Activated CD8-positive, alpha-beta T cell treated with anti-CD3 and anti-CD28 coated beads, Interleukin-2, amount 10 ng/mL, durations not matched to agents 7 days and 5 days (primary cell): ENCODE measurements at regions of chr14 and their contacts with region 1.

Region 1: GRCh38 chr14:94412671-94413638 is 24.6 kb upstream of the SERPINA1 start:
- DNase-seq: no peak
- ATAC-seq: no peak
- H3K4me3 Mint-ChIP-seq: no peak overlapping the region
- H3K27ac Mint-ChIP-seq: no peak overlapping the region
- H3K4me1 Mint-ChIP-seq: no peaks in the 10 kb centered on the region
- H3K27me3 Mint-ChIP-seq: peaks cover 3% of the 10 kb centered on the region

Region 2: DNA sequence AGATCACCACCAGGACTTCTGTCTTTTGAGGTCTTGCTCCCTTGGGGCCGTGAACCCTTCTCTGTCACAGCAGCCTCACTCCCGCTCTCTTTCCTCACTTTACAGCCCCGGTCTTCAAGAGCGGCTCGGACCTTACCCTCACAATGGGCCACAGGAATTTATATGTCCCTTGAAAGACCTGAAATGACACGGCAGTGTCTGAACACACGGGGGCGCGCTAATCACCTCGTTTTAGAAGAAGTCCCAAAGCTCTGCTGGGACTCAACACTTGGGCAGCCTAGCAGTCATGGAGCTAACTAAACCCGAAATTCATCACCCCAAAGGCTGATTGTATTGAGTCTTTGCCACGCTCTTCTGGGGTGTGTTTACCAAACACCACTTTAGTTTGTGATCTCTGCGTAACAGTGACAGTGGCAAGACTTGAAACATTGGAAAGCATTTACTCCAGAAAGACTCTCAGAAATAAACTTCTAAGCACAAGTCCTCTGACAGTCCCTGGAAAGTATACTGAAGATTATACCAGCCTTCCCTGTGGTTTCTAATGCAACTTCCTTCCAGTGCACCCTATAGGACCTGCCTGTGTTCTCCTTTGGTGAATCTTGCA is 10.6 kb after region 1 on chr14:
- CTCF ChIA-PET with region 1: interaction called, 12 read pairs
- POLR2A ChIA-PET with region 1: no interaction called
- DNase-seq: peak; percentile 62
- ATAC-seq: peak; percentile 49
- H3K4me3 Mint-ChIP-seq: no peak overlapping the region
- H3K27ac Mint-ChIP-seq: no peak overlapping the region
- H3K4me1 Mint-ChIP-seq: peaks cover 1% of the 10 kb centered on the region
- H3K27me3 Mint-ChIP-seq: peaks cover 6% of the 10 kb centered on the region

Region 3: GRCh38 chr14:94448071-94448808 is 35.3 kb after region 1 on chr14:
- CTCF ChIA-PET with region 1: no interaction called
- POLR2A ChIA-PET with region 1: no interaction called
- DNase-seq: no peak
- ATAC-seq: no peak
- H3K4me3 Mint-ChIP-seq: no peak overlapping the region
- H3K27ac Mint-ChIP-seq: no peak overlapping the region
- H3K4me1 Mint-ChIP-seq: no peaks in the 10 kb centered on the region
- H3K27me3 Mint-ChIP-seq: peaks cover 6% of the 10 kb centered on the region

Region 4: DNA sequence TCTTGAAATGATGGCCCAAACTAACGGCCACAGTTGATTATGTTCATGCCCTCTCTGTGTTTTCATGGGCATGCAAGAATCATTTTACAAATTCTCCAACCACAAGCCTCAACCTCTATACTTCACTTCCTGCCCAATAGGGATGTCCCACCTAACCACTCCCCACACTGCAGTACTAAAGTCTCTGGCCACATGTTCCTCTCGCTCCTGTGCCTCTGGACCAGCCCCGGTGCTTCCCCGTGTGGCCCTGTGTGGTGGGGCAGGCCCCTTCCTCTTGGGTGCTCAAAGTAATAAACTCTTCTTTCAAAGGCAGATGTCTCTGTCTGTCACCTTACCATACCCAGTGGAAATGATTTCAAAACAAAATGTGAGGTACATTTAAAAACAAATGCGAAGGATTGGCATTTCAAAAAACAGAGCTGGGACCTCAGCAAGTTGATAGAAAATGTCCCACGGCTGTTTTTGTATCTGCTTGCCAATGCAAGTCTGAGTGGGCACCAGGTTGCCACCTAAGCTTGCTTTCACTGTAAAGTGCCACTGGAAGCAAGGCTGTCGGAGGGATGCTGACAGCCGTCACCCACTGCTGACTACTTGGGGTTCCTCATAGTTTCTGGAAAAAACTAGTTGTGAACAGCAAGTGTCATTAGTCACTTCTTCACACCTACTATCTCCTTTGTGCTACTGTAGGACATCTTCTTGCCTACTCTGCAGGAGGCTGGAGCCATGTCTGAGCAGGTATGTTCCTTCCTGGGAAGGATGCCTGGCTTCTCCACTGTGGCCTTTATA is 47.9 kb after region 1 on chr14:
- CTCF ChIA-PET with region 1: no interaction called
- POLR2A ChIA-PET with region 1: no interaction called
- DNase-seq: no peak
- ATAC-seq: no peak
- H3K4me3 Mint-ChIP-seq: no peak overlapping the region
- H3K27ac Mint-ChIP-seq: no peak overlapping the region
- H3K4me1 Mint-ChIP-seq: peaks cover 5% of the 10 kb centered on the region
- H3K27me3 Mint-ChIP-seq: peaks cover 13% of the 10 kb centered on the region